ENCODE measurements at regions of chr21 and their contacts with region 1.

Region 1: GRCh38 chr21:39349211-39350093 is 564 bp upstream of the HMGN1 start:
- DNase-seq: peak; percentile 95 to 97 (median 97)
- H3K4me3 ChIP-seq: peak overlapping the region; percentile 51 to 98 (median 78)
- H3K27ac ChIP-seq: peak overlapping the region; percentile 60 to 96 (median 90)
- H3K27me3 ChIP-seq: no peaks in the 10 kb centered on the region
- CTCF ChIP-seq: peak in 7 of 56 donors; percentile 9 to 23 (median 15)

Region 2: DNA sequence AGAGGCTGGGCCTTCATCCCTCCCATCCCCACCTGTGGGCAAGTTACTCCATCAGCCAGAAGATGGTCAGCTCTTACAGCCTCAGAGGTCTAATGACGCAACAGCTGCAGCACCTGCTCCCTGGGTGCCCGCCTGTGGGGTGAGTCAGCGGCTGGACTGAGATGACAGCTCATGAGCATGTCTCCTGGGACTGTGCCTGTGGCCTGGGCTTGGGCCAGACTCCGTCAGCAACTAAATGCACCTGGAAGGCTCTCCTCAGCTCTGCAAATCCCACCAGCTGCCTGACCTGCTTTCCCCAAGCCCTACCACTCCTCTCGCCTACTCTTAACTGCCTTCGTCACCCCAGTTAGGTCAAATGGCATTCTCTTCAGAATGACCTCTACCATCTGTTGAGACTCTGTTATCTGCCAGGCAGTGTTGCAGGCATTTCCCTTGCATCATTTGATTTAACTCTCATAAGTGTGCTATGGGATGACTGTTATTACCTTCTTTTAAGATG is 496.0 kb before region 1 on chr21:
- intact Hi-C with region 1: no loop called
- DNase-seq: no peak
- H3K4me3 ChIP-seq: no peak overlapping the region
- H3K27ac ChIP-seq: no peak overlapping the region
- H3K27me3 ChIP-seq: peaks cover 0 to 4% (median 0%) of the 10 kb centered on the region in 45 donors
- CTCF ChIP-seq: no peak

Region 3: GRCh38 chr21:39296891-39297290 is 52.6 kb before region 1 on chr21:
- intact Hi-C with region 1: no loop called
- DNase-seq: no peak
- H3K4me3 ChIP-seq: no peak overlapping the region
- H3K27ac ChIP-seq: no peak overlapping the region
- H3K27me3 ChIP-seq: no peaks in the 10 kb centered on the region
- CTCF ChIP-seq: no peak

Region 4: GRCh38 chr21:39313571-39314142 is 35.8 kb before region 1 on chr21 and contains the start of gene BRWD1:
- intact Hi-C with region 1: loop called (anchors 1 kb)
- DNase-seq: peak; percentile 54 to 81 (median 68)
- H3K4me3 ChIP-seq: peak within 1 kb of the TSS; percentile 55 to 98 (median 87)
- H3K27ac ChIP-seq: peak within 1 kb of the TSS; percentile 81 to 100 (median 98)
- H3K27me3 ChIP-seq: no peaks in the 10 kb centered on the region
- CTCF ChIP-seq: peak in 51 of 56 donors; percentile 17 to 63 (median 44)
- total RNA-seq, gene BRWD1: 78.6 to 146 (median 112) TPM

Region 5: GRCh38 chr21:39379986-39380891 is 30.8 kb after region 1 on chr21:
- intact Hi-C with region 1: loop called (anchors 1 kb)
- DNase-seq: peak; percentile 87 to 95 (median 92)
- H3K4me3 ChIP-seq: peak overlapping the region; percentile 66 to 100 (median 88)
- H3K27ac ChIP-seq: peak overlapping the region in 58 of 59 donors; percentile 9 to 97 (median 87)
- H3K27me3 ChIP-seq: no peaks in the 10 kb centered on the region
- CTCF ChIP-seq: peak in 34 of 56 donors; percentile 11 to 59 (median 30)

Region 6: GRCh38 chr21:39388038-39388810 is 38.8 kb after region 1 on chr21:
- intact Hi-C with region 1: loop called (anchors 2 kb)
- DNase-seq: peak; percentile 83 to 95 (median 90)
- H3K4me3 ChIP-seq: peak overlapping the region; percentile 28 to 69 (median 57)
- H3K27ac ChIP-seq: peak overlapping the region in 48 of 59 donors; percentile 2 to 95 (median 76)
- H3K27me3 ChIP-seq: no peaks in the 10 kb centered on the region
- CTCF ChIP-seq: peak; percentile 76 to 98 (median 94)

Measured in dorsolateral prefrontal cortex (tissue), 120 donors.